Heart left ventricle (tissue), 16 donors: ENCODE measurements at regions of chr3 and their contacts with region 1.

Region 1: DNA sequence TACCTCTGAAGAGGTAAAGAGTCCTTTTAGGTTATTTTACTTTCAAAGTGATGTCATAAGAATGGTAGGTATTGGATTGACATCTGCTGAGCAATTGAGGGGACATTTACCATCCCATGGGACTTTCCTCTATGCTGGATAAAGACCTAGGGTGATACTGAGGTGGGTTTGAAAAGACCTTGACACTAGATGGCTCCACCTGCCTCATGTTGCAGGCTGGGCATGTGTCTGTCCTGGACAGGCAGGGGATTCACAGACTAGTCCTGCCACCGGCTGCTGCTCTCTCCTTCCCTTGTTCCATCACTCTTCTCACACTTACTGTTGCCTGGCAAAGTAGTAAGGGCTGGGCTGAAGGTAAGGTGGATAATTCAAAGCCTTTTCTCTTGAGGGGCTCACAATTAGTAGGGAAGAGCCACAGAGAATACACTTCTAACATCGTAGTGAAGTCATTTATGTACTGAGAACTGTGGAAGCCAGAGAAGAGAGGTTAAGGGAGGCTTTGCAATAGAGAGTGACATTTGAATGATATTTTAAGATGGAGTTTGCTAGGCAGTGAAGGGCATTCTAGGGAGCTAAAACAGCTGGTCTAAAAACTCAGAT is 27.7 kb downstream of the TRAK1 start:
- DNase-seq: peak in 2 of 5 donors; percentile 14 to 54
- ATAC-seq: peak; percentile 59 to 64 (median 60)
- H3K4me3 ChIP-seq: no peak overlapping the region
- H3K27ac ChIP-seq: peak overlapping the region in 7 of 12 donors; percentile 2 to 49 (median 27)
- H3K4me1 ChIP-seq: peaks cover 8 to 93% (median 79%) of the 10 kb centered on the region in 12 donors
- H3K27me3 ChIP-seq: no peaks in the 10 kb centered on the region
- CTCF ChIP-seq: peak in 10 of 12 donors; percentile 20 to 55 (median 40)
- POLR2A ChIP-seq: no peak

Region 2: GRCh38 chr3:42159706-42160472 is 41.0 kb after region 1 on chr3:
- intact Hi-C with region 1: loop called in 1 of 10 experiments (anchors 5 kb)
- DNase-seq: peak; percentile 37 to 72 (median 49)
- ATAC-seq: peak; percentile 70 to 93 (median 84)
- H3K4me3 ChIP-seq: peak overlapping the region in 4 of 12 donors; percentile 5 to 13 (median 12)
- H3K27ac ChIP-seq: peak overlapping the region in 8 of 12 donors; percentile 6 to 58 (median 50)
- H3K4me1 ChIP-seq: peaks cover 12 to 75% (median 53%) of the 10 kb centered on the region in 12 donors
- H3K27me3 ChIP-seq: no peaks in the 10 kb centered on the region
- CTCF ChIP-seq: no peak
- POLR2A ChIP-seq: no peak

Region 3: GRCh38 chr3:42184651-42185443 is 66.0 kb after region 1 on chr3:
- intact Hi-C with region 1: loop called in 8 of 10 experiments (anchors 2 to 5 kb)
- DNase-seq: no peak
- ATAC-seq: no peak
- H3K4me3 ChIP-seq: no peak overlapping the region
- H3K27ac ChIP-seq: peak overlapping the region in 1 of 12 donors; percentile 8
- H3K4me1 ChIP-seq: peaks cover under 1 to 81% (median 41%) of the 10 kb centered on the region in 12 donors
- H3K27me3 ChIP-seq: no peaks in the 10 kb centered on the region
- CTCF ChIP-seq: no peak
- POLR2A ChIP-seq: no peak